H1 (cell line): ENCODE measurements at regions of chr1 and their contacts with region 1.

Region 1: GRCh38 chr1:101309334-101310311 is 72.8 kb downstream of the S1PR1 start:
- DNase-seq: peak in 1 of 2 experiments; percentile 70
- H3K4me3 ChIP-seq: peak overlapping the region; percentile 36 to 60 (median 52); a peak in 7 of 8 replicates
- H3K27ac ChIP-seq: no peak overlapping the region
- H3K4me1 ChIP-seq: peaks cover 0 to 7% (median 3%) of the 10 kb centered on the region in 4 experiments; a peak in 4 of 7 replicates
- H3K27me3 ChIP-seq: no peaks in the 10 kb centered on the region
- CTCF ChIP-seq: peak; percentile 77 to 82 (median 81)
- EP300 ChIP-seq: no peak
- POLR2A ChIP-seq: no peak
- RAD21 ChIP-seq: peak; percentile 81 to 86

Region 2: GRCh38 chr1:101247404-101248287 is 62.0 kb before region 1 on chr1:
- CTCF ChIA-PET with region 1: interaction called, 11 read pairs
- POLR2A ChIA-PET with region 1: no interaction called
- DNase-seq: no peak
- H3K4me3 ChIP-seq: no peak overlapping the region
- H3K27ac ChIP-seq: no peak overlapping the region
- H3K4me1 ChIP-seq: no peaks in the 10 kb centered on the region
- H3K27me3 ChIP-seq: no peaks in the 10 kb centered on the region
- CTCF ChIP-seq: no peak
- EP300 ChIP-seq: no peak
- POLR2A ChIP-seq: no peak
- RAD21 ChIP-seq: no peak

Region 3: GRCh38 chr1:101293461-101294051 is 16.1 kb before region 1 on chr1:
- CTCF ChIA-PET with region 1: interaction called, 15 read pairs
- POLR2A ChIA-PET with region 1: no interaction called
- DNase-seq: no peak
- H3K4me3 ChIP-seq: no peak overlapping the region
- H3K27ac ChIP-seq: no peak overlapping the region
- H3K4me1 ChIP-seq: peaks cover 0 to 4% (median 0%) of the 10 kb centered on the region in 4 experiments; a peak in 1 of 7 replicates
- H3K27me3 ChIP-seq: no peaks in the 10 kb centered on the region
- CTCF ChIP-seq: no peak
- EP300 ChIP-seq: no peak
- POLR2A ChIP-seq: no peak
- RAD21 ChIP-seq: no peak

Region 4: DNA sequence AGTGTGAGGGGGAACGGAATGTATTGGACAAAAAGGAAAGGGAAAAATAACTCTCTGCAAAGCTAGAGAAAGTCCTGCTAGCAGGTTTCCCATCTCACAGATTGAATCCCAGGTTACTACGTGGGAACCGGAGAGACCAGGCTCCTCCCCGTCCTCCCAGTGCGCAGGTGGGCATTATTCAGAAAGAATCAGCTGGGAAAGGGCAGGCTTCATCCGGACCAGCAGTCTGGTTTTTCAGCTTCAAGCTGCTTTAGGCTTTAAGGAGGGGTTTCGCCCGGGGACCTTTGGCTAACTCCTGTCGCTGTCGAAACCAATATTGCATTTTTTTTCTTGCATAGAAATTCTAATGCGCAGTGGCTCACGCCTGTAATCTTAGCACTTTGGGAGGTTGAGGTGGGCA is 16.3 kb after region 1 on chr1:
- CTCF ChIA-PET with region 1: interaction called, 15 read pairs
- POLR2A ChIA-PET with region 1: no interaction called
- DNase-seq: no peak
- H3K4me3 ChIP-seq: no peak overlapping the region
- H3K27ac ChIP-seq: no peak overlapping the region
- H3K4me1 ChIP-seq: no peaks in the 10 kb centered on the region
- H3K27me3 ChIP-seq: no peaks in the 10 kb centered on the region
- CTCF ChIP-seq: no peak
- EP300 ChIP-seq: no peak
- POLR2A ChIP-seq: no peak
- RAD21 ChIP-seq: no peak

Region 5: DNA sequence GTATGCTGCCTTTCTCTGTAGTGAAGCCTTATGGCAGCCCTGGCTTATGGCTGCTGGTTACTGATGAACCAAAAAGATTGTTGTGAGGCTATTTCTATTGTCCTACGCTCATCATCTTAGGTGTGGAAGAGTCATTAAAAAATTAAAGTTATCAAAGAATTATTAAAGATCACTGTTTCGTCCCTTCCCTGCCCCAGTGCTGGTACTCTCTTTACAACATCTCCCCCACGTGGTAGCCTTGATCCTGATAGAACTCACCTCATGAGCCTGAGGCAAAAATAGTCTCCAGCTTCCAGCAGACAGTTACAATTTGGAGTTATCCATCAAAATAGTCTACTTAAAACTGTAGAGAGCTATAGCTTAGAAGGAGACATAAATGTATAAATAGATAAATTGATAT is 128.7 kb after region 1 on chr1:
- CTCF ChIA-PET with region 1: interaction called, 32 read pairs
- POLR2A ChIA-PET with region 1: no interaction called
- DNase-seq: no peak
- H3K4me3 ChIP-seq: no peak overlapping the region
- H3K27ac ChIP-seq: no peak overlapping the region
- H3K4me1 ChIP-seq: no peaks in the 10 kb centered on the region; a peak in 1 of 7 replicates
- H3K27me3 ChIP-seq: no peaks in the 10 kb centered on the region
- CTCF ChIP-seq: peak; percentile 7 to 55 (median 43)
- EP300 ChIP-seq: no peak
- POLR2A ChIP-seq: no peak
- RAD21 ChIP-seq: peak; percentile 71 to 73

Region 6: GRCh38 chr1:101444873-101445618 is 135.4 kb after region 1 on chr1:
- CTCF ChIA-PET with region 1: interaction called, 17 read pairs
- POLR2A ChIA-PET with region 1: no interaction called
- DNase-seq: no peak
- H3K4me3 ChIP-seq: no peak overlapping the region
- H3K27ac ChIP-seq: no peak overlapping the region
- H3K4me1 ChIP-seq: no peaks in the 10 kb centered on the region; a peak in 1 of 7 replicates
- H3K27me3 ChIP-seq: no peaks in the 10 kb centered on the region
- CTCF ChIP-seq: no peak
- EP300 ChIP-seq: no peak
- POLR2A ChIP-seq: no peak
- RAD21 ChIP-seq: no peak